Esophagus squamous epithelium (tissue), 5 donors: ENCODE measurements at regions of chr12 and their contacts with region 1.

Region 1: DNA sequence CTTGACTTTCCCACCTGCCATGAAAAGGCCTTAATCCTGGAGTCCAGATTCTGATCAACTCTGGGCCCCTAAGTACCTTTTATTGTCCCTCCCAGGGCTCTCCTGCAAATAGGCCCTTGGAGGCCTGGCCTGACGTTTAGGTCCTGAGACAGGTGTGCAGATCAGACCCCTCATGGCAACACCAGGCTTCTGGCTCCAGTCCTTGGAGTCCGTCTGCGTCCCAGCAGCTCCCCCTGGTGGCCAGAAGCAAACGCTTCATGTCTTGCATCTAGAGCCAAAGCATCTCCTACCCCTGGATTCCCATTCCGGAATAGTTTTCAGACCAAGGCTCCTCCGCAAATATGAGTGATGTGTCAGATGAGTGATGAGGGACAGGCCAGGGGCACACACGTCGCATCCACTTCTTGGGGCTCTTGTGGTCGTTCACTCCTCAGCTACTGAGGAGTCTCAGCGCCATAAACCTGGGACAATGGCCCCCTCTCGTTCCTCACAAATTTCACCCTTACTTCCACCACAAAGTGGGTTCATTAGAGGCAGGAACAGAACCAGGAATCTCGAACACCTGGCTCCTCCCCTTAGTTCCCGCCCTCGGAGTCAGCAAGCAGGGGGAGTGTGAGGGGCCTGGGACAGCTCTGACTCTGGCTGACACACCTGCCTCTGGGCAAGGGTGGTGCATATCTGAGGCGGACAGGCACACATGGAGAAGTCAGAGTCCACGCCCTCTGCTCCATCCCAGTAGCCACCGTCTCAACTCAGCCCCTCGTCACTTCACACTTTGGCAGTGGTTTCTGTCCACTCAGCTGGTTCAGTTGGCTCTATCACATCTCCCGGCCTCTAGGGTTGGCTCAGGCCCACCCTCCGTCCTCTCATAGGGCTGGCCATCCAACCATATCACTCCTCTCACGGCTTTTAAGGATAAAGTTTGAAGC is 77.9 kb upstream of the PWP1 start:
- DNase-seq: no peak
- H3K4me3 ChIP-seq: no peak overlapping the region
- H3K27ac ChIP-seq: no peak overlapping the region
- H3K4me1 ChIP-seq: no peaks in the 10 kb centered on the region
- H3K27me3 ChIP-seq: no peaks in the 10 kb centered on the region
- CTCF ChIP-seq: peak; percentile 64 to 86 (median 85)
- POLR2A ChIP-seq: no peak

Region 2: DNA sequence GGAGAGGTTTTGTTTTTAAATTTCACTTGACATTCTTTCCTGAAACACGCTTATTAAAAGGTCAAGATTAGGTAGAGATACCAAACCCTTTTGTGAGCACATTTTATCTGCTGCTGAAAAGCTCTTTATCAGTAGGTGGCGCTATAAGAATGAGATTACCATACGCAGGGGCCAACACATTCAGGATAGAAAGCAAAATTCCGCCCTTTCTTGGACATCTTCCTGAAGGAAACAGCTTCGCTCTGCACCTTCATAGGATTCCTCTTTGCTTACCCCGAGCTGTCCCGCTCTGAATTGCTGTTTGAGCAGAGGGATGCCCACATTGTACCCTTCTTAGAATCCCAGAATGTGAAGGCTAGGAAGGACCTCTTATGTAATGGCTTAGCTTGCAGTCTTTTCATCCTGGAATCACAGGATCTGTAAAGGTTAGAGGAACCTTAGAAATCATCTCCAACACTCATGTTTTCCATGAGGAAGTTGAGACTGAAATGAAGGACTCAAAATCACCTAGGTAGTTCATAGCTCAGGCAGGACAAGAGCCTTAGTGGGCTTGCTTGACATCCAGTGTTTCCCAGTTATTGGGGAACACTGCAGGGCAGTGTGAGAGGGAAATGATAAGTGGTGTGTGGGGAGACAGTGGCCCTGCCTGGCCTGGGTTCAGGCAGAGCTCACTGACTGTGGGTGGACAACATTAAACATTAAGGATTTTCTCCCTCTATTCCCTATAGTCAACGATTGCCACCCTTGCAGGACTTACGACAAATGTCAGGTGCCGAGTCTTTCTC is 475.7 kb before region 1 on chr12:
- intact Hi-C with region 1: loop called (anchors 5 kb)
- DNase-seq: no peak
- H3K4me3 ChIP-seq: no peak overlapping the region
- H3K27ac ChIP-seq: no peak overlapping the region
- H3K4me1 ChIP-seq: peaks cover 0 to 5% (median 0%) of the 10 kb centered on the region in 3 donors
- H3K27me3 ChIP-seq: no peaks in the 10 kb centered on the region
- CTCF ChIP-seq: peak; percentile 57 to 87 (median 73)
- POLR2A ChIP-seq: no peak

Region 3: GRCh38 chr12:107317751-107318613 is 289.7 kb before region 1 on chr12:
- intact Hi-C with region 1: loop called (anchors 10 kb)
- DNase-seq: peak; percentile 8
- H3K4me3 ChIP-seq: peak overlapping the region; percentile 53 to 73 (median 66)
- H3K27ac ChIP-seq: peak overlapping the region; percentile 79 to 87 (median 83)
- H3K4me1 ChIP-seq: peaks cover 13 to 58% (median 17%) of the 10 kb centered on the region in 3 donors
- H3K27me3 ChIP-seq: peaks cover 0 to 82% (median 0%) of the 10 kb centered on the region in 4 donors
- CTCF ChIP-seq: peak in 4 of 6 experiments; percentile 5 to 38 (median 20)
- POLR2A ChIP-seq: peak in 3 of 4 donors; percentile 49 to 81 (median 65)

Region 4: GRCh38 chr12:107402041-107403022 is 205.4 kb before region 1 on chr12:
- intact Hi-C with region 1: loop called (anchors 10 kb)
- DNase-seq: no peak
- H3K4me3 ChIP-seq: no peak overlapping the region
- H3K27ac ChIP-seq: no peak overlapping the region
- H3K4me1 ChIP-seq: peaks cover 8 to 44% (median 15%) of the 10 kb centered on the region in 3 donors
- H3K27me3 ChIP-seq: no peaks in the 10 kb centered on the region
- CTCF ChIP-seq: peak in 5 of 6 experiments; percentile 58 to 85 (median 65)
- POLR2A ChIP-seq: no peak